ENCODE measurements at regions of chr7 and their contacts with region 1.

Region 1: GRCh38 chr7:123865517-123866117 is 20.6 kb downstream of the HYAL4 start:
- DNase-seq: peak in 8 of 9 donors; percentile 22 to 60 (median 46)
- ATAC-seq: peak; percentile 81
- H3K4me3 ChIP-seq: no peak overlapping the region
- H3K4me3 Mint-ChIP-seq: no peak overlapping the region
- H3K27ac ChIP-seq: no peak overlapping the region
- H3K27ac Mint-ChIP-seq: no peak overlapping the region
- H3K4me1 ChIP-seq: no peaks in the 10 kb centered on the region
- H3K4me1 Mint-ChIP-seq: no peaks in the 10 kb centered on the region
- H3K27me3 ChIP-seq: no peaks in the 10 kb centered on the region
- H3K27me3 Mint-ChIP-seq: peaks cover 0 to 13% (median 4%) of the 10 kb centered on the region in 5 donors

Region 2: GRCh38 chr7:123494193-123494796 is 371.3 kb before region 1 on chr7:
- CTCF ChIA-PET with region 1: no interaction called
- POLR2A ChIA-PET with region 1: no interaction called
- intact Hi-C with region 1: loop called (anchors 1 to 2 kb)
- DNase-seq: peak in 6 of 9 donors; percentile 2 to 46 (median 36)
- ATAC-seq: peak; percentile 67
- H3K4me3 ChIP-seq: no peak overlapping the region
- H3K4me3 Mint-ChIP-seq: no peak overlapping the region
- H3K27ac ChIP-seq: no peak overlapping the region
- H3K27ac Mint-ChIP-seq: no peak overlapping the region
- H3K4me1 ChIP-seq: no peaks in the 10 kb centered on the region
- H3K4me1 Mint-ChIP-seq: no peaks in the 10 kb centered on the region
- H3K27me3 ChIP-seq: no peaks in the 10 kb centered on the region
- H3K27me3 Mint-ChIP-seq: peaks cover 10 to 41% (median 30%) of the 10 kb centered on the region in 5 donors

Region 3: GRCh38 chr7:123580406-123581161 is 285.0 kb before region 1 on chr7:
- CTCF ChIA-PET with region 1: no interaction called
- POLR2A ChIA-PET with region 1: no interaction called
- intact Hi-C with region 1: loop called (anchors 1 to 5 kb)
- DNase-seq: peak in 2 of 9 donors; percentile 9 to 10
- ATAC-seq: peak; percentile 53
- H3K4me3 ChIP-seq: no peak overlapping the region
- H3K4me3 Mint-ChIP-seq: no peak overlapping the region
- H3K27ac ChIP-seq: no peak overlapping the region
- H3K27ac Mint-ChIP-seq: no peak overlapping the region
- H3K4me1 ChIP-seq: no peaks in the 10 kb centered on the region
- H3K4me1 Mint-ChIP-seq: peaks cover 0 to 2% (median 0%) of the 10 kb centered on the region in 7 donors
- H3K27me3 ChIP-seq: no peaks in the 10 kb centered on the region
- H3K27me3 Mint-ChIP-seq: peaks cover 13 to 37% (median 29%) of the 10 kb centered on the region in 5 donors

Region 4: GRCh38 chr7:123624527-123625183 is 241.0 kb before region 1 on chr7:
- CTCF ChIA-PET with region 1: no interaction called
- POLR2A ChIA-PET with region 1: no interaction called
- intact Hi-C with region 1: loop called in 1 of 2 experiments (anchors 2 kb)
- DNase-seq: peak in 8 of 9 donors; percentile 19 to 54 (median 30)
- ATAC-seq: peak; percentile 57
- H3K4me3 ChIP-seq: no peak overlapping the region
- H3K4me3 Mint-ChIP-seq: no peak overlapping the region
- H3K27ac ChIP-seq: no peak overlapping the region
- H3K27ac Mint-ChIP-seq: no peak overlapping the region
- H3K4me1 ChIP-seq: no peaks in the 10 kb centered on the region
- H3K4me1 Mint-ChIP-seq: peaks cover 0 to 5% (median 0%) of the 10 kb centered on the region in 7 donors
- H3K27me3 ChIP-seq: no peaks in the 10 kb centered on the region
- H3K27me3 Mint-ChIP-seq: peaks cover 0 to 11% (median 8%) of the 10 kb centered on the region in 5 donors

Region 5: GRCh38 chr7:123635551-123636359 is 229.9 kb before region 1 on chr7:
- CTCF ChIA-PET with region 1: interaction called, 3 read pairs
- POLR2A ChIA-PET with region 1: no interaction called
- intact Hi-C with region 1: loop called (anchors 1 to 5 kb)
- DNase-seq: peak in 1 of 9 donors; percentile 3
- ATAC-seq: no peak
- H3K4me3 ChIP-seq: no peak overlapping the region
- H3K4me3 Mint-ChIP-seq: no peak overlapping the region
- H3K27ac ChIP-seq: no peak overlapping the region
- H3K27ac Mint-ChIP-seq: no peak overlapping the region
- H3K4me1 ChIP-seq: no peaks in the 10 kb centered on the region
- H3K4me1 Mint-ChIP-seq: no peaks in the 10 kb centered on the region
- H3K27me3 ChIP-seq: peaks cover 0 to 4% of the 10 kb centered on the region in 2 donors
- H3K27me3 Mint-ChIP-seq: peaks cover 19 to 31% (median 26%) of the 10 kb centered on the region in 5 donors

Region 6: DNA sequence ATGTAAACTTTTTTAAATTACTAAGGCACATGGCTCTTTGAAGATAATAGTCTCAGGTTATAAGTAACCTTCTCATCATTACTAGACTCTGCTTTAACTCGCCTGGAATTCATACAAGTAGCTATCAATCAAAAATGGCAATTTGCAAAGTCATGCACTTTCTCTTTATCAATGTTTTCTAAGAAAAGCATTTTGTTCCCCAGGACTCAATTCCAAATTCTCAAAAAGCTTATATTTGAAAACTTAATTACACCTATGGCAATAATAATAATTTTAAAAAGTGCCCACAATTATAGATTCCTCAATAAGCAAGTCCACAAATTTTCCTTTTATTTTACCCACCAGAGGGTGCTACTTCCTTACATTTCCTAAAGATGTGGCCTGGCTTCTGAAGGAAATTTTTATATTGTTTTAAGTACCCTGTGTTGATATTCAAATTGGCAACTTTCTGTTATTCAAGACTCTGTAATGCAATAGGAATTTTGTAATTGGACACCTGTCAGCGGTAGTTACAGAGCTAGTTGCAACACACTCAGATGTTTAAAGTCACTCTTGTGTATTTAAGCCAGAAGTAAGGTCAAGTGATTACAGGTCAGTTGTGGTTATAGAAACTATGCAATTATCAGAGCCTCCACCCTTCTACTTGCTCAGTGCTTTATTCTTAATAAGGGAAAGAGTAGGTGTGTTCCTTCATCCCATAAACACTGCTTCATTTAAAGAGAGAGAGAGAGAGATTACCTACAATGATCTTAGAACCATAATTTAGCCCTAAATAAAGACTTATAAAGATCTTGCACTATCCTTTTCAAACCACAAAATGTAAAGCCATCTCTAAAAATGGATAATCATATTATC is 67.7 kb before region 1 on chr7:
- CTCF ChIA-PET with region 1: interaction called, 5 read pairs
- POLR2A ChIA-PET with region 1: no interaction called
- intact Hi-C with region 1: loop called (anchors 1 kb)
- DNase-seq: peak in 5 of 9 donors; percentile 3 to 10 (median 9)
- ATAC-seq: no peak
- H3K4me3 ChIP-seq: no peak overlapping the region
- H3K4me3 Mint-ChIP-seq: no peak overlapping the region
- H3K27ac ChIP-seq: no peak overlapping the region
- H3K27ac Mint-ChIP-seq: no peak overlapping the region
- H3K4me1 ChIP-seq: no peaks in the 10 kb centered on the region
- H3K4me1 Mint-ChIP-seq: no peaks in the 10 kb centered on the region
- H3K27me3 ChIP-seq: no peaks in the 10 kb centered on the region
- H3K27me3 Mint-ChIP-seq: peaks cover 0 to 3% (median 0%) of the 10 kb centered on the region in 5 donors

Region 7: GRCh38 chr7:124072603-124073309 is 207.1 kb after region 1 on chr7:
- CTCF ChIA-PET with region 1: no interaction called
- POLR2A ChIA-PET with region 1: no interaction called
- intact Hi-C with region 1: no loop called
- DNase-seq: no peak
- ATAC-seq: no peak
- H3K4me3 ChIP-seq: no peak overlapping the region
- H3K4me3 Mint-ChIP-seq: no peak overlapping the region
- H3K27ac ChIP-seq: no peak overlapping the region
- H3K27ac Mint-ChIP-seq: no peak overlapping the region
- H3K4me1 ChIP-seq: no peaks in the 10 kb centered on the region
- H3K4me1 Mint-ChIP-seq: no peaks in the 10 kb centered on the region
- H3K27me3 ChIP-seq: no peaks in the 10 kb centered on the region
- H3K27me3 Mint-ChIP-seq: no peaks in the 10 kb centered on the region